Left colon (tissue), 2 donors: ENCODE measurements at regions of chr22 and their contacts with region 1.

Region 1: GRCh38 chr22:36274531-36274930 is 21.6 kb downstream of the APOL1 start:
- DNase-seq: no peak
- ATAC-seq: no peak

Region 2: GRCh38 chr22:36194971-36195370 is 79.6 kb before region 1 on chr22:
- intact Hi-C with region 1: loop called in 1 of 2 experiments (anchors 5 kb)
- DNase-seq: peak; percentile 54 to 58
- ATAC-seq: peak; percentile 85